ENCODE measurements at regions of chr3 and their contacts with region 1.

Region 1: GRCh38 chr3:130773366-130773765 is 26.7 kb upstream of the PIK3R4 start:
- DNase-seq: no peak
- H3K4me3 ChIP-seq: no peak overlapping the region
- H3K27ac ChIP-seq: no peak overlapping the region
- H3K4me1 ChIP-seq: no peaks in the 10 kb centered on the region
- H3K27me3 ChIP-seq: no peaks in the 10 kb centered on the region
- CTCF ChIP-seq: no peak

Region 2: GRCh38 chr3:130569461-130570365 is 203.7 kb before region 1 on chr3:
- CTCF ChIA-PET with region 1: no interaction called
- POLR2A ChIA-PET with region 1: no interaction called
- intact Hi-C with region 1: no loop called
- DNase-seq: no peak
- H3K4me3 ChIP-seq: no peak overlapping the region
- H3K27ac ChIP-seq: no peak overlapping the region
- H3K4me1 ChIP-seq: no peaks in the 10 kb centered on the region
- H3K27me3 ChIP-seq: peaks cover 98% of the 10 kb centered on the region
- CTCF ChIP-seq: no peak

Region 3: DNA sequence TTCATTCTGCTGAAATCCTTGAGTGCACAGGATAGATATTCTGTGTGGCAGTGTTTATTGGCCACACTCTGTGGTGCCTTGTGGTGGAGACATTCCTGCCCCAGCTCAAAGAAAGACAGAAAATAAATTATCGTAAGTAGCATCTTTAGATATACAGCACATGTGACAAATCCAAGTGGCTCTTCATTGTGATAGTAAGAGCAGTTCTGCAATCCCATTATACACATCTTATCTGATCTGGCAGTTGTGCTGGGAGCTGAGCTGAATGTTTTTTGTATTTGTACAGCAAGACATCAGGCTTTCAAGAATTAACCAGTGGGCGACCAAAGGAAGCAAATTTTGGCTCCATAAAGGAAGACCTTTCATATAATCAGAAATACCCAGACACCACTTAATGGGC is 964.7 kb after region 1 on chr3:
- CTCF ChIA-PET with region 1: interaction called, 26 read pairs
- POLR2A ChIA-PET with region 1: no interaction called
- intact Hi-C with region 1: no loop called
- DNase-seq: no peak
- H3K4me3 ChIP-seq: no peak overlapping the region
- H3K27ac ChIP-seq: no peak overlapping the region
- H3K4me1 ChIP-seq: no peaks in the 10 kb centered on the region
- H3K27me3 ChIP-seq: no peaks in the 10 kb centered on the region
- CTCF ChIP-seq: no peak

Measured in PC-9 (cell line).